ENCODE measurements at regions of chr19 and their contacts with region 1.

Region 1: GRCh38 chr19:18785179-18786128 is 5.7 kb downstream of the COMP start:
- DNase-seq: peak; percentile 95

Region 2: DNA sequence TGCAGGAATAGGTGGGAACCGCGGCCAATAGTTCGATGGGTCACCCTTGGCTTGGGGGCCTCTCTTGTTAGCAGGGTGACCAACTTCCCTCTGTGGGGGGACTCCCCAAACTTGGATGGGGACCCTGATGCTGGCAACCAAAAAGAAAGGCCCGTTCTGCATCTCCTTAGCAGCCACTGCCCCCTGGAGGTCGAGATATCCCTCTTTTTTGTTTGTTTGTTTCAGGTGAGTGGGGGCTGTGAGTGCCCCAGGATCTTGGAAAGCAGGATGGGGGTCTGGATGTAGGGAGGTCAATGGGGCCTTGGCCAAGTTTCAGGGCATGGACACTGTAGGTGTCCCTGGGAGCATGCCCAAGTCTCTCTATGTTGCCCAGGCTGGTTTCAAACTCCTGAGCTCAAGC is 109.7 kb before region 1 on chr19:
- intact Hi-C with region 1: no loop called
- DNase-seq: no peak

Region 3: GRCh38 chr19:18763674-18764588 is 21.5 kb before region 1 on chr19:
- intact Hi-C with region 1: loop called in 1 of 2 experiments (anchors 1 kb)
- DNase-seq: no peak

Region 4: GRCh38 chr19:18865973-18866799 is 80.7 kb after region 1 on chr19:
- intact Hi-C with region 1: loop called in 1 of 2 experiments (anchors 1 kb)
- DNase-seq: peak; percentile 89

Measured in posterior vena cava (tissue), 2 donors.